Activated CD4-positive, alpha-beta T cell treated with anti-CD3 and anti-CD28 coated beads, Interleukin-2, amount 10 ng/mL, durations not matched to agents 24 days and 14 days (primary cell): ENCODE measurements at regions of chr7 and their contacts with region 1.

Region 1: GRCh38 chr7:111012799-111013675 is 77.9 kb upstream of the LRRN3 start:
- DNase-seq: peak; percentile 88
- H3K4me3 Mint-ChIP-seq: peak overlapping the region; percentile 83
- H3K27ac Mint-ChIP-seq: peak overlapping the region; percentile 90
- H3K4me1 Mint-ChIP-seq: peaks cover 66% of the 10 kb centered on the region
- H3K27me3 Mint-ChIP-seq: no peaks in the 10 kb centered on the region

Region 2: DNA sequence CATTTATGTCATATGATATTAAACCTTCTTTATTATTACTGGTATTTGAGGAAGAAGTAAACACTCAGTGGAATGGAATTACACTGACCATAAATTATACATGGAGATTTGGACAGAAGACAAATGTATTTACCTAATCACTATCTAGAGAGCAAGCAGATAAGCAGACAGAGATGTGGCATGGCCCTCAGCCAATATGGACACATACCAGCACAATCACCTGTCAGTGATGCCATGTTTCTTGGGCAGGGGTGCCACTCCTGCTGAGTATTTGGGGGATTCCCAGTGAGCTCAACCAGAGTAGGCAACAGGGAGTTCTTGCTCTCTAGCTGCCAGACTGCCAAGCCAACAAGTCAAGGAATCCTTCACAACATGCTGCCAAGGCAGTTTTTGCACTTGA is 788.4 kb before region 1 on chr7:
- intact Hi-C with region 1: no loop called
- DNase-seq: no peak
- H3K4me3 Mint-ChIP-seq: no peak overlapping the region
- H3K27ac Mint-ChIP-seq: no peak overlapping the region
- H3K4me1 Mint-ChIP-seq: no peaks in the 10 kb centered on the region
- H3K27me3 Mint-ChIP-seq: no peaks in the 10 kb centered on the region

Region 3: DNA sequence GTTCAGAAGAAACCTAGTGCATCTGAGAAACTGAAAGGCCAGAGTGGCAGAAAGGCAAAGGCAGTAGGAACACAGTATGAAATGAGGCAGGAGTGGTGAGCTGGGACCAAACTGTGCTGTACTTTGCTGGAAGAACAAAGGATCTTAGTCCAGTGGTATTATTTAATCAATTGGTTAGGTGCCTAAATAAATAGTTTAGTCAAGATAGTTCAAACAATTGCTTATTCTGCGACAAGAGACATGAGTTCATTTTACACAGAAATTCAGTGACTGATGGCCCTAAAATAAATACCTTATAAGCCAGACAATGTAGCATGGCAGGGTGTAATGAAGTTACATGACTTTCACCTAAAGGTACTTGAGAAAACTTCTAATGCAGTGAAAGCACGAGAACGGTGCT is 103.9 kb before region 1 on chr7:
- intact Hi-C with region 1: loop called (anchors 5 kb)
- DNase-seq: no peak
- H3K4me3 Mint-ChIP-seq: no peak overlapping the region
- H3K27ac Mint-ChIP-seq: no peak overlapping the region
- H3K4me1 Mint-ChIP-seq: peaks cover 29% of the 10 kb centered on the region
- H3K27me3 Mint-ChIP-seq: no peaks in the 10 kb centered on the region

Region 4: GRCh38 chr7:110977127-110977737 is 35.8 kb before region 1 on chr7:
- intact Hi-C with region 1: loop called (anchors 2 kb)
- DNase-seq: peak; percentile 62
- H3K4me3 Mint-ChIP-seq: peak overlapping the region; percentile 40
- H3K27ac Mint-ChIP-seq: peak overlapping the region; percentile 38
- H3K4me1 Mint-ChIP-seq: peaks cover 25% of the 10 kb centered on the region
- H3K27me3 Mint-ChIP-seq: no peaks in the 10 kb centered on the region

Region 5: DNA sequence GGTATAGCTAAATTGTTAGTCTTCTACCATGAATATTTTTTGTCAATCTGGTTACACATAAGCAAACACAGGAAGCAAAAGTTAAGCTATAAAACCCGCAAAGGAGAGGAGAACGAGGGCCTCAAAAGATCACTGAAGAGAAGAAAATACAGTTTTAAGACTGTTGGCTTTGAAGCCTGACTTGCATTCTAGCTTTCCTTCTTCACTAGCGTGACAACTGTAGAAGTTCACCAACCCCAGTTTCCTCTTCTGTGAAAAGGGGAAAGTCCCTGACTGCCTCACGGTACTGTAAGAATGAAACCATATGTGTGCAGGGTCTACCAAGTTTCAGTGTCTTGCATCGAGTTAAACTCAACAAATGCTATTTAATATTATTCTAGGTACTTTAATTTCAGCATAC is 70.4 kb after region 1 on chr7:
- intact Hi-C with region 1: loop called (anchors 1 kb)
- DNase-seq: peak; percentile 93
- H3K4me3 Mint-ChIP-seq: peak overlapping the region; percentile 58
- H3K27ac Mint-ChIP-seq: peak overlapping the region; percentile 86
- H3K4me1 Mint-ChIP-seq: peaks cover 70% of the 10 kb centered on the region
- H3K27me3 Mint-ChIP-seq: peaks cover 2% of the 10 kb centered on the region

Region 6: DNA sequence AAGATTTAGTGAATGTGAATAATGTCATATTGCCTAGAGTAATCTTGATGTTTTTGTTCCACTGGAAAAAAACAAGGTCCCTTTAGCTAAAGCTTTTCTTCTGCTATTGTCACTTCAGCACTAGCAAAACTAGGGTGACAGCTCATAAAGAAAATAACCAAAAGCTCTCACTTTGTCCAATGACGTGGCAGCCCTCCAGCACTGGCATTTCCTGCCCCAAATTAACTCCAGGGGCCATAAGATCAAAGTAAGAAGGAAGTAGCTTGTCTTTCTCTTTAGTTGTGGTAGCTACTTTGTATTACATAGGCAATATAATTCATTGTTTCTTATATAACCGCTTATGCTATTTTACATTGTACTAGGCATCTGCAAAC is 125.1 kb after region 1 on chr7:
- intact Hi-C with region 1: loop called (anchors 2 kb)
- DNase-seq: peak; percentile 86
- H3K4me3 Mint-ChIP-seq: peak overlapping the region; percentile 76
- H3K27ac Mint-ChIP-seq: peak overlapping the region; percentile 96
- H3K4me1 Mint-ChIP-seq: peaks cover 23% of the 10 kb centered on the region
- H3K27me3 Mint-ChIP-seq: no peaks in the 10 kb centered on the region

Region 7: DNA sequence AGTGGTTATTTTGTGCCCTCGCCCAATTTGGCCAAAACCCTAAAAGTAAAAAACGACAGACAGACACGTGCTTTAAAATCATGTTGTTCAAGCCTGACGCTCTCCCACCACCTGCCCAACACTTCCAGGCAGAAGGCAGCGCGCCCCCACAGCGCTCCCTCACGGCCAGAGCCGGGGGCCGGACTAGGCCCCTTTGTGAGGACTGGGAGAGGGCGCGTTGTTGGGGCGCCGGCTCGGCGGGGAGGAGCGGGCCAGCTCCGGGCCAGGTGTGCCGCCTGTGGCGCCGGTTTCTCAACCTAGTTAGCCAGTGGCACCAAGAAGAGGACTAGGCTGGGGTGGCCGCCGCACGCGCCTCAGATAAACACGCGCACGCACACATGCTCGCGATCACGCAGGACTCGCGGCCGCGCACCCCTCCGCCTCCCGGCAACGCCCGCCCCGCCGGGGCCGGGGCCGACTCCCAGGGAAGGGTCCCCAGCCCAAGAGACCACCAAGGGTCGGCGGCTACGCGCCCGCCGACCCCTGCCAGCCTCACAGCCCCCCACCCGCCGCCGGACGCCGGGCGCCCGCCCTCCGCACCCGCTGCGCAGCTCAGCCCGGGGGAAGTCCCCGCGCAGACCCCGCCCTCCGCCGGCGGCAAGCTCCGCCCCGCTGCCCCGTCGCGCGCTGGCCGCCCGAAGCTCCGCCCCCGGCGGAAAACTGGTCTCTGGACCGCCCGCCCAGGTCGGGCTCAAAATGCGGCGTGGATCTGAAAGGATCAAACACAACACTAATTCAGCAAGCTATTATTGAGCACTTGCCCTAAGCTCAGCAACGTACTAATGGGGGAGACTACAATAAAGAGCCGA is 549.1 kb after region 1 on chr7 and contains the start of gene IMMP2L:
- intact Hi-C with region 1: loop called (anchors 5 kb)
- DNase-seq: peak; percentile 98
- H3K4me3 Mint-ChIP-seq: peak within 1 kb of the TSS; percentile 92
- H3K27ac Mint-ChIP-seq: peak within 1 kb of the TSS; percentile 91
- H3K4me1 Mint-ChIP-seq: peaks cover 32% of the 10 kb centered on the region
- H3K27me3 Mint-ChIP-seq: peaks cover 9% of the 10 kb centered on the region
- total RNA-seq, gene IMMP2L: 13.8 and 16.7 TPM in 2 replicates